AG04449 (cell line): ENCODE measurements at regions of chr21 and their contacts with region 1.

Region 1: DNA sequence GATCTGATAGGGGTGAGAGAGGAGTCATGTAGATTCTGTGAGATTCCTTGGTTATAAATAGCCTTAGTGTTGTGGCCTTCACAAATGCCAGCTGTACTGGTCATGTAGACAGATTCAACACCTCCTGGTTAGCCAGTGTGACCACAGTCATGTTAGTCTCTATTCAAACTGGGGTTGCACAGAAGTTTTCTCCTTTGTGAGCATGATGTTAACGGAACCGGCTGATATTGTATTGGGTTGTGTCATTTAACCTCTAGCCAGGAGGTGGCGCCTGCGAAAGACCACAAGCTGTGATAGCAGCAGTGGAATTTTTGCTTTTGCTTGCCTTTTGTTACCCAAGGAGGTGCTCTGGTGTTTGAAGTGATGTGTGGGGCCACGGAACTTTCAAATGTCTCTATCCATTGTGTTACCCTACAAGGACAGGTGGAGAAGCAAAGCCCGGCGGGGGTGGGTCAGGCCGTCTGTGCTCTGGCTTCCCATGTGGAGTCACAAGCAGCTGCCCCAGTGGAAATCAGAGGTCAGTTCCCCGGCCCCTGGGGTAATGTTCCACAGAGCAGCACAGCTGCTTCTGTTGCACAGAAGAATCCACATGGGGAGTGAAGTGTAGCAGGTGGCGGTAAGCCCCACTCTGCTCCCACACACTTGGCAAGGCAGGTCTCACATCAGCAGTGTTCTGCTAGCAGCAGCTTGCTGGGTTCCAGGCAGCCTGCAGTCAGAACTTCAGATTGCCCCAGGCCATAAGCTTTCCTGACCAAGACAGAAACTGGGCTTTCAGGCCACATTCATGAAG is 112.6 kb downstream of the ADAMTS1 start:
- DNase-seq: no peak
- H3K4me3 ChIP-seq: no peak overlapping the region
- CTCF ChIP-seq: peak; percentile 65

Region 2: GRCh38 chr21:26743524-26743923 is 10.9 kb after region 1 on chr21:
- CTCF ChIA-PET with region 1: interaction called, 32 read pairs
- POLR2A ChIA-PET with region 1: no interaction called
- DNase-seq: no peak
- H3K4me3 ChIP-seq: no peak overlapping the region
- CTCF ChIP-seq: no peak

Region 3: DNA sequence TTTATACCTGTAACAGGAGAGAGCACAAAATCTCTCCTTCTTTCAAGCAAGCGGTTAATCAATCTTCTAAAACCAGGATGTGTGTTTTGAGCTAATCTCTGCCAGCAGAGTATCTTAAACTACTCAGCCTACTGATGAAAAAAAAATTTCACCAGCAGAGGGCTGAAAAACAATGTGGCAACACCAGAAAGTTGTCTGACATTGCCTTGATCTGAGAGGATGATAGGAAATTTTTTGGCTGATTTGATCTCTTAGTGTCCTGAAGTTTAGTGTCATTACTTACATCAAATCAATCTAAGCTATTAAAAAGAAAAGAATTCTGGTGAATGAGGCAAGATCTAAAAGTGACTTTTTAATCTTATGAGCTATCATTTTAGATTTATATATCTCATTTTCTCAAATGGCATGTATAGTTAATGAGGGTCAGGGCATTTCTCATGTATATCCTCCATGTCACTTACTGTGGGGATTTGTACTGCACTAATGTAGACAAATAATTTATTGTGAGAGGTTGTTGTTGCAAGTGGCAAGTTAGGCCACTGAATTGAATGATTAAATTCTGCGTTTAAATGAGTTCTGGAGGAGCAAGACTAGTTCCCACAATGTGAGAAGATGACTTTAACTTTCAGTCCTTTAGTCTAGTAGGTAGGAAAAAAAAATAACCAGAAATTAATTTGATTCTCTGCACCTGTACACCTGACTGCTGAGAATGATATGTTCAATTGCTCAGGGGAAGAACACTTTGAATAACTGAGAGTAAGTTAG is 101.7 kb after region 1 on chr21:
- CTCF ChIA-PET with region 1: interaction called, 23 read pairs
- POLR2A ChIA-PET with region 1: no interaction called
- DNase-seq: no peak
- H3K4me3 ChIP-seq: no peak overlapping the region
- CTCF ChIP-seq: peak; percentile 1

Region 4: DNA sequence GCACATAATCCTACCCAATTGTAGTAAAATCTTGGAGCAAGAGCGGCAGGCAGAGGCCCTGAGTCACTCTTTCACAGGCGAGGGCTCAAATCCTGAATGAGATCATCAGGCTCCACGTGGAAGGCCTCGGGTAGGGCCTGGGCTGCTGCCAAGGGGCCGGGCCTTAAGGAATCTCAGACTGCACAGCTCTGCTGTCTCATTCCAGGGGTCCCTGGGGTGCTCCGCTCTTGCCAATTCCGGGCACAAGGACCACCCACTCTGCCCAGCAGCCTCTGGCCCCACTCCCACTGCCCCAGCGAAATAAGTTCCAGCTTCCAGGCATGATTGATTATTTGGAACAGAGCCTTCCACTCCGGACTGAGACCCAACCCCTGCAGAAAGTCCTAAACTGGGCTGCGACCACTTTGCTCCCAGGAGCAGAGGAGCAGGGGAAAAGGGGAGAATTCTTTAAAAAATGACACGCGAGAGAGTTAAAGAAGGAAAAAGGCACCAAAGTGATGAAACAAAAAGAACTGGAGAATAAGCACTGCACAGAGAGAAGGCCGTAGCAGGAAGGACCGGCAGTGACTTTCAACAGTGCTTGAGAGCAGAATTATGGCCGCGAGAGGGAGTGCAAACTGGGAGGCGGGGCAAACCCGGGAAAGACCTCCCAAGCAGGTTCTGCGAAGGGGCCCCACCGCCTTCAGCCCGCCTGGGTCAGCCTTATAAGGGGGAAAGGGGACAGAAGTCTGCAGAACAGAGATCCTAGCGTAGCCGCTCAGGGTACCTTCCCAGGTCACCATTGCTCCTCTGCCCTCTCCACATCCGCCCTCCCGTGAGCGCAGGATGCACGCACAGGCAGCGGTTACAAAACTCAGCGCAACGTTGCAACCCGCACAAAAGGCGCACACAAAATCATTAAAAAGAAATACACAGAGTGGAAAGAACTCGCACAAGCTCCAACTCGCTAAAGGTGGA is 110.6 kb after region 1 on chr21:
- CTCF ChIA-PET with region 1: interaction called, 23 read pairs
- POLR2A ChIA-PET with region 1: interaction called, 3 read pairs
- DNase-seq: peak; percentile 84
- H3K4me3 ChIP-seq: peak overlapping the region; percentile 98
- CTCF ChIP-seq: peak; percentile 59